ENCODE measurements at regions of chr4 and their contacts with region 1.

Region 1: GRCh38 chr4:168831919-168832762 is 177.9 kb downstream of the CBR4 start:
- DNase-seq: peak; percentile 82 to 90
- H3K4me3 ChIP-seq: peak overlapping the region; percentile 88
- H3K4me1 ChIP-seq: peaks cover 10% of the 10 kb centered on the region
- H3K27me3 ChIP-seq: no peaks in the 10 kb centered on the region

Region 2: DNA sequence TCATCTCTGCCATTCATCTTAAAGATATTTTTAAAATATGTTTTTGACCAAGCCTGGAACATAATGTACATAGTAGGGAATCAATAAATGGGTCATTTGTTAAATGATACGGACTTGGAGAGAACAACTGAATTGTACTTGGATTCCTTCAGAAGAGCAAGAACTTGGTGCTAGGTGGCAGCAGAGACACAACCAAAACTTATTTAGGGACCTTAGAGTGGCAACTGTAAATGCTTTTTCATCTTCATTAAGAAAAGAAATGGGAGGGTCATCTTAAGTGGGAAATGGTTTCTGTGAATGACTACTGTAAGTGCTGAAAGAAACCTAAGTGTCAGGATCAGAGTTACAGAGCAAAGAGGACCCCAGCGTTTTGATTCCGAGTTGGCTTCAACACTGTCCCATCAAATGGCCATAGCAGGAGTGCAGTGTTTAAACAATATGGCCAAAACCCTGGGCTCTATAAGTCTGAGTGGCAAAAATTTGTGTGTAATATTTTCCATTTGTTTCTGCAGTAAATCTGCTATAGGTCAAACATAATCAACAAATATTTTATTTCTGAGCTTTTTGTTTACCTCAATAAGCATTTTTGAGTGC is 121.7 kb before region 1 on chr4:
- in situ Hi-C with region 1: loop called (anchors 10 kb)
- DNase-seq: peak; percentile 56 to 82
- H3K4me3 ChIP-seq: no peak overlapping the region
- H3K4me1 ChIP-seq: peaks cover 13% of the 10 kb centered on the region
- H3K27me3 ChIP-seq: no peaks in the 10 kb centered on the region